Naive thymus-derived CD4-positive, alpha-beta T cell (primary cell): ENCODE measurements at regions of chr10 and their contacts with region 1.

Region 1: DNA sequence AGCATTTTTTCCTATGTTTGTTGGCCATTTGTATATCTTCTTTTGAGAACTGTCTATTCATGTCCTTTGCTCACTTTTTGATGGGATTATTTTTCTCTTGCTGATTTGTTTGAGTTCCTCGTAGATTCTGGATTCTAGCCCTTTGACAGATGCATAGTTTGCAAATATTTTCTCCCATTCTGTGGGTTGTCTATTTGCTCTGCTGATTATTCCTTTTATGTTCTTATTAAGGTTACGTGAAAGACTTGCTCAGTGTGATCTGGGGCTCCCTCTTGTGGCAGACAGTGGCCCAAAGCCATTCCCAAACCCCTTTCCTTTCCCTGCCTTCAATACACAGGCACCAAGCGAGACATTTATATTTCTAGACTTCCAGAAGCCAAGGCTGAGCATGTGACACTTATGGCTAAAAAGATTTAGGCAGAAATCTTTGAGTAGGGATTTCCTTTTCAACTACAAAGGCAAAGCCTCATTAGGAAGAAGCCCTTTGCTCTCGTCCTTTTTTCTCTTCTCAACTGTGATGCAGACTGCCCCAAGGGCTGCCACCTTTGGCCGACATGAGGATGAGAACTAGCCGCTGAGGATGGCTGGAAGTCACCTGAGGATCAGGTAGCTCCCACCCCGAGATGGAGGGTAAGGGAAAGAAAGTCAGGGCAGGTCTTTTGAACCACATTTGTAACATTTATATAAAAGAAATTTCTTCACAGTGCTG is 23.6 kb downstream of the ST8SIA6 start:
- DNase-seq: peak in 8 of 9 donors; percentile 44 to 68 (median 60)
- ATAC-seq: peak; percentile 43
- H3K4me3 ChIP-seq: no peak overlapping the region
- H3K4me3 Mint-ChIP-seq: peak overlapping the region in 9 of 10 donors; percentile 11 to 81 (median 42)
- H3K27ac ChIP-seq: no peak overlapping the region
- H3K27ac Mint-ChIP-seq: peak overlapping the region in 8 of 9 donors; percentile 20 to 97 (median 90)
- H3K4me1 ChIP-seq: peaks cover 37 to 43% of the 10 kb centered on the region in 2 donors
- H3K4me1 Mint-ChIP-seq: peaks cover 43 to 58% (median 53%) of the 10 kb centered on the region in 7 donors
- H3K27me3 ChIP-seq: no peaks in the 10 kb centered on the region
- H3K27me3 Mint-ChIP-seq: peaks cover 0 to 24% (median 0%) of the 10 kb centered on the region in 5 donors

Region 2: DNA sequence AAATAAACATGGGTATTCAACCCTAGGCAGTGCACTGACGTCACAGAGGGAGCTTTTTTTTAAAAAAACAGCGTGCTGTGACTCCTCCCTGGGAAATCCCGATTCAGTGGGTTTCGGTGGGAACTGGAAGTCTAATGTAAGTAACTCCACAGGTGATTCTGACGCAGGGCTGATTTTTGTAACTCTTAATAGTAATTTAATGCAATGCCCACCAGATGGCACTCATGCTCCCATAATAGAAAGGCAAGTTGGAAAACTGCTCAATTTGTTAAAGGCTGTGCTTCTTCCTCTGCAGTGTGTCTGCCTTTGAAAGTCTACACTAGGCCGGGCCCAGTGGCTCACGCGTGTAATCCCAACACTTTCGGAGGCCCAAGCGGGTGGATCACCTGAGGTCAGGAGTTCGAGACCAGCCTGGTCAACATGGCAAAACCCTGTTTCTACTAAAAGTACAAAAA is 602.7 kb before region 1 on chr10:
- CTCF ChIA-PET with region 1: interaction called, 4 read pairs
- POLR2A ChIA-PET with region 1: no interaction called
- intact Hi-C with region 1: loop called in 1 of 2 experiments (anchors 1 kb)
- DNase-seq: peak; percentile 22 to 78 (median 69)
- ATAC-seq: peak; percentile 96
- H3K4me3 ChIP-seq: no peak overlapping the region
- H3K4me3 Mint-ChIP-seq: no peak overlapping the region
- H3K27ac ChIP-seq: no peak overlapping the region
- H3K27ac Mint-ChIP-seq: peak overlapping the region in 3 of 9 donors; percentile 63 to 84 (median 82)
- H3K4me1 ChIP-seq: no peaks in the 10 kb centered on the region
- H3K4me1 Mint-ChIP-seq: peaks cover 0 to 12% (median 8%) of the 10 kb centered on the region in 7 donors
- H3K27me3 ChIP-seq: no peaks in the 10 kb centered on the region
- H3K27me3 Mint-ChIP-seq: peaks cover 0 to 9% (median 0%) of the 10 kb centered on the region in 5 donors

Region 3: DNA sequence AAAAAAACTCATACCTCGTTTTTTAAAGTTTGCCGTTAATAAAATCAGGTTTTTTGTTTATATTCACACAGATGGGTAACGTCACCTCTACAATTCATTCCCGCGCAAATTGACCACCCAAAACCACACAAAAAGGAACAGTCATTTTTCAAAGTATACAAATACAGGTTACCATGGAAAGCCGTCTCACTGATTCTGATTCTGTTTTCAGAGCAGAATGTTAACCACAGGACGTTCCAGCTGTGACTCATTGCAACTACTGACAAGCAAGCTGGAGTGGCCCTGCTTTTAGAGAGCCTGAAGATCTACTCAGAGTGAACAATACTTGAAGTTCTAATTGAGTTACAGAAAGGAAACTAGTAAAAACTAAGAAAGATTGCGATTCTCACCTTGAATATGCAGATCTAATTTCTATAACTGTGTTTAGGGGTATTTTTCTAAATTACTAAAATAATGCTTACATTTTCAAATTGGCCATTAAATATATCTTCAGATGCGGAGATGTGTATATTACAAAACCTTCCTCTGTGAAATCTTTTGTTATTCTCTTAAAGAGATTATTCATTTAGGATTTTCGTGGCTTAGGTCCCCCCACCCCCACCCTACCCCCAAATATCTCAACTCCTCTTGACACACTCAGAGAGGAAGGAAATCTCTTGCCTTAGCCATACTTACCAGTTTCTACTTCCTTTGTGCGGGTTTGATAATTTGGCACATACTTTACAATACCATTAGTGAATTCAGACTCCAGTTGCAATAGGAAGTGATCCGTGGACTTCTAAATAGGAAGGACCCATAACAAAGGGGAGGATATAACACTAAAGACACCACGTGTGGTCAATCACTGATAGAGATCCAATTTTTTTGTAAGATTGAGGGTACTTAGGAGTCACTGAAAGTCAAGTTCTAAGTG is 407.2 kb before region 1 on chr10:
- CTCF ChIA-PET with region 1: no interaction called
- POLR2A ChIA-PET with region 1: interaction called, 3 read pairs
- intact Hi-C with region 1: loop called (anchors 2 to 10 kb)
- DNase-seq: peak in 8 of 9 donors; percentile 60 to 89 (median 78)
- ATAC-seq: peak; percentile 86
- H3K4me3 ChIP-seq: no peak overlapping the region
- H3K4me3 Mint-ChIP-seq: peak overlapping the region; percentile 5 to 89 (median 64)
- H3K27ac ChIP-seq: peak overlapping the region; percentile 82
- H3K27ac Mint-ChIP-seq: peak overlapping the region; percentile 74 to 99 (median 91)
- H3K4me1 ChIP-seq: peaks cover 46 to 59% of the 10 kb centered on the region in 2 donors
- H3K4me1 Mint-ChIP-seq: peaks cover 32 to 72% (median 67%) of the 10 kb centered on the region in 7 donors
- H3K27me3 ChIP-seq: no peaks in the 10 kb centered on the region
- H3K27me3 Mint-ChIP-seq: peaks cover 0 to 9% (median 0%) of the 10 kb centered on the region in 5 donors

Region 4: DNA sequence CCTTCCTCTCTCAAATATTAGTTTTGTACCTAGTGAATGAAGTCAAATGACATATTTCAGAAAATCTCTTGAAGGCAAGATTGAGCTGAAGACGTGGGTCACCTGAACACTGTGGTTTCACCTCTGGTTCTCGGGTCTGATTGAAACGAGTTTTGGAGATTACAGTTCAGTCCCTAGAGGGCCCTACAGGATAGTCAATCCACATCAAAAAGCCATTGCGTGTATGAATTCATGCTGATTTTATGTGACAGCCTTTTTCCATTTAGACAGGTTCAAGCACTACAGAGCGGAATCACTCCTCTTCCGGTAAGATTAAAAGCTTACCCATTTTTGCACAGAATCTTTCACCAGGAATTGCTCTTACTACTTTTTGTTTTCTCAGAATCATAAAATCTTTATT is 140.6 kb before region 1 on chr10:
- CTCF ChIA-PET with region 1: interaction called, 12 read pairs
- POLR2A ChIA-PET with region 1: no interaction called
- intact Hi-C with region 1: loop called (anchors 1 kb)
- DNase-seq: peak in 6 of 9 donors; percentile 18 to 46 (median 30)
- ATAC-seq: peak; percentile 34
- H3K4me3 ChIP-seq: no peak overlapping the region
- H3K4me3 Mint-ChIP-seq: no peak overlapping the region
- H3K27ac ChIP-seq: no peak overlapping the region
- H3K27ac Mint-ChIP-seq: no peak overlapping the region
- H3K4me1 ChIP-seq: no peaks in the 10 kb centered on the region
- H3K4me1 Mint-ChIP-seq: peaks cover 0 to 8% (median 4%) of the 10 kb centered on the region in 7 donors
- H3K27me3 ChIP-seq: no peaks in the 10 kb centered on the region
- H3K27me3 Mint-ChIP-seq: peaks cover 0 to 24% (median 18%) of the 10 kb centered on the region in 5 donors

Region 5: DNA sequence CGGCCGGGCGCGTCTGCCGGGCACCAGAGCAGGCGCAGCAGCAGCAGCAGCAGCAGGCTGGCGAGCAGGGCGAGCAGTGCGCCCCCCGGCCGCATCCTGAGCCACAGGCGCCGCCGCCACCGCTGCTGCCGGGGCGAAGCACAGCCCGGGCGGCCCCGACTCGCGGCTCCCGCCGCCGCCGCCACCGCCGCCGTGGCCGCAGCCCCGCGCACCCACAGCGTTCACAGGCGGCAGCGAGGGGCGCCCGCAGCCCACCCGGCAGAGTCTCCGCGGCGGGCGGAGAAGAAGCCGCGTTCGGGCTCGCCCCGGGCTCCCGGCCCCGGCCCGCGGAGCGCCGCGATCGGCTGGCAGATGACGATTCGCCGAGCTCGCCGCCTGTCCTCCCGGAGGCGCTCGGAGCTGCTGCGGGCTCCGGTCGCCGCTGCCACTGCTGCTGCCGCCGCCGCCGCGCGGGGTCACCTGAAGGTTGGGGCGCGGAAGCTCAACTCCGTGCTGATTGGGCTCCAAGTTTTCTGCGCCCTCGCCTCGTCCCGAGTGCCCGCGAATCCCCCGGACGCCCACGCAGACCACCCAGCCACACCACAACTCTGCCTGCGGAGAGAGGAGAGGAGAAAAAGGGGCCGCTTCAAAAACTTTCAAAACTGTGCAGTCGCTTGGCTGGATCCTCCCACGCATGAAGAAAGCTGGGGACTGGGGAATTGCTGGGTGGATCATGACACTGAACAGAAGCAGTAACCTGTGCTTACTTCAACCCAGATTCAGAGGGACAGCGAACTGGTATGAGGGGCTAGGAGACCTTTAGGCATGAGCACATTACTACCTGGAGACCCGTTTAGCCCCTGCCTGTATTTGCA is 23.6 kb after region 1 on chr10 and contains the start of gene ST8SIA6:
- CTCF ChIA-PET with region 1: interaction called, 3 read pairs
- POLR2A ChIA-PET with region 1: interaction called, 20 read pairs
- intact Hi-C with region 1: loop called (anchors 1 to 2 kb)
- DNase-seq: peak; percentile 26 to 64 (median 52)
- ATAC-seq: peak; percentile 80
- H3K4me3 ChIP-seq: peak within 1 kb of the TSS; percentile 64
- H3K4me3 Mint-ChIP-seq: peak within 1 kb of the TSS; percentile 82 to 92 (median 89)
- H3K27ac ChIP-seq: peak within 1 kb of the TSS; percentile 29
- H3K27ac Mint-ChIP-seq: peak within 1 kb of the TSS in 5 of 9 donors; percentile 18 to 87 (median 74)
- H3K4me1 ChIP-seq: peaks cover 4 to 10% of the 10 kb centered on the region in 2 donors
- H3K4me1 Mint-ChIP-seq: peaks cover 5 to 23% (median 20%) of the 10 kb centered on the region in 7 donors
- H3K27me3 ChIP-seq: no peaks in the 10 kb centered on the region
- H3K27me3 Mint-ChIP-seq: peaks cover 0 to 66% (median 5%) of the 10 kb centered on the region in 5 donors
- total RNA-seq, gene ST8SIA6: 0.43 to 2.5 (median 0.60) TPM